ENCODE measurements at regions of chr12 and their contacts with region 1.

Region 1: GRCh38 chr12:21501379-21501956 is at the starts of genes GOLT1B and RECQL:
- DNase-seq: peak; percentile 95
- H3K4me3 Mint-ChIP-seq: no peak within 1 kb of the TSS
- H3K27ac Mint-ChIP-seq: no peak within 1 kb of the TSS
- H3K4me1 Mint-ChIP-seq: peaks cover 44% of the 10 kb centered on the region
- H3K27me3 Mint-ChIP-seq: no peaks in the 10 kb centered on the region
- total RNA-seq, gene GOLT1B: 36.2 to 36.8 TPM
- total RNA-seq, gene RECQL: 89.8 to 93.7 TPM

Region 2: GRCh38 chr12:21451529-21451928 is 49.9 kb before region 1 on chr12:
- CTCF ChIA-PET with region 1: no interaction called
- intact Hi-C with region 1: loop called (anchors 1 kb)
- DNase-seq: no peak
- H3K4me3 Mint-ChIP-seq: no peak overlapping the region
- H3K27ac Mint-ChIP-seq: no peak overlapping the region
- H3K4me1 Mint-ChIP-seq: peaks cover 26% of the 10 kb centered on the region
- H3K27me3 Mint-ChIP-seq: no peaks in the 10 kb centered on the region

Region 3: DNA sequence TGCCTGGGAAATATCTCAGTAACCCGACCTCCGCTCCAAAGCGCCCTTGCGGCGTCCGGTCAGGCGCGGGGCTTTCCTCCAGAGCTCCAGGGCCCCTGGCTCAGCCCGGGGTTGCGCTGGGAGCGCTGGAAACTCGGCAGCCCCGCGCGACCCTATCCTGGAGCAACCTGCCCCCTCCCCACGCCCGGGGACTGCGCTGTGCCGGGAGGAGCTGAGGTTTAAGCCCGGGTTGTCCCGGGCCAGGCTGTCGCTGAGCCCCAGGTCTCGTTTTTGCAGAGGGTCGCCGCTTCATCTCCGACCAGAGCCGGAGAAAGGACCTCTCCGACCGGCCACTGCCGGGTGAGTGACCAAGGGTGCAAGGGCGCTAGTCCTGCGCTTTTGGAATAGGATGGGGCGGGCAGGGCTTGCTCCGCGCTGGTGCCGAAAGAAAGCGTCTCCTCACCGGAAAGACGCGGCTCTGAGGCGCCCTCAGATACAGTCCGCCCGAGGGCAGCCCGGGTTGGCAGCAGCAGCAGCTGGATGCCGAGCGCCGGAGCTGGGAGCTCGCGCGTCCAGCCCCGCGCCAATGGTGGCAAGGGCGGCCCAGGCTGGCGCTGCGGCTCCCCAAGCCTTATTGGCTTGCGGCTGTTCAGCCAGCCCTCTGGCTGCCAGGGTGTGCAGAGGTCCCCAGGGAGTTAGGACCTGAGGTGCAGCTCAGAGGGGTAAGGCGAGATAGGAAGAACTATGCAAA is 26.1 kb after region 1 on chr12:
- CTCF ChIA-PET with region 1: no interaction called
- intact Hi-C with region 1: loop called (anchors 1 kb)
- DNase-seq: peak; percentile 74
- H3K4me3 Mint-ChIP-seq: peak overlapping the region; percentile 59
- H3K27ac Mint-ChIP-seq: no peak overlapping the region
- H3K4me1 Mint-ChIP-seq: peaks cover 2% of the 10 kb centered on the region
- H3K27me3 Mint-ChIP-seq: peaks cover 20% of the 10 kb centered on the region

Region 4: DNA sequence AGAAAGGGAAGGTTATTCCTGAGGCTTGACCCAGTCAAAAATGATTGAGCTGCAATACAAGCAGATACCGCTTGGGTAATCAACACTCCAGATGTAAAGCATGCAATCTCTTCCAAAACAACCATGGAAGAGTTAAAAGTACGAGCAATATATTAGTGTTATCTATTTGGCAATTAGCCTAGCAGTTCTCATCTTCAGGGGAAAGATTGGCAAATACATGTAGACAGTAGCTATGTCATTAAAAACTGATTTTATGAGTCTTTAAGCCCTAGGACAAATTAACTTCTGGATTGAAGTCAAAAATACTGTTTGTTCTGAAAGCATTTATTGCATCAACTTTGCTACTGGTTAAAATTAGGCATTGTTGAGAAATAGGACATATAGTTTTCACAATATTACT is 112.5 kb after region 1 on chr12:
- CTCF ChIA-PET with region 1: no interaction called
- intact Hi-C with region 1: loop called (anchors 1 kb)
- DNase-seq: no peak
- H3K4me3 Mint-ChIP-seq: no peak overlapping the region
- H3K27ac Mint-ChIP-seq: peak overlapping the region; percentile 85
- H3K4me1 Mint-ChIP-seq: peaks cover 49% of the 10 kb centered on the region
- H3K27me3 Mint-ChIP-seq: no peaks in the 10 kb centered on the region

Region 5: GRCh38 chr12:22046090-22046967 is 544.9 kb after region 1 on chr12 and contains the start of gene CMAS:
- CTCF ChIA-PET with region 1: no interaction called
- intact Hi-C with region 1: loop called (anchors 1 kb)
- DNase-seq: peak; percentile 84
- H3K4me3 Mint-ChIP-seq: peak within 1 kb of the TSS; percentile 95
- H3K27ac Mint-ChIP-seq: peak within 1 kb of the TSS; percentile 84
- H3K4me1 Mint-ChIP-seq: peaks cover 39% of the 10 kb centered on the region
- H3K27me3 Mint-ChIP-seq: no peaks in the 10 kb centered on the region
- total RNA-seq, gene CMAS: 47.3 to 48.5 TPM

Region 6: GRCh38 chr12:22518067-22518719 is 1016.7 kb after region 1 on chr12:
- CTCF ChIA-PET with region 1: no interaction called
- intact Hi-C with region 1: no loop called
- DNase-seq: no peak
- H3K4me3 Mint-ChIP-seq: no peak overlapping the region
- H3K27ac Mint-ChIP-seq: no peak overlapping the region
- H3K4me1 Mint-ChIP-seq: no peaks in the 10 kb centered on the region
- H3K27me3 Mint-ChIP-seq: no peaks in the 10 kb centered on the region

Measured in activated naive CD4-positive, alpha-beta T cell treated with anti-CD3 and anti-CD28 coated beads for 36 hours (primary cell).